ENCODE measurements at regions of chr7 and their contacts with region 1.

Region 1: GRCh38 chr7:80379034-80379982 is 132.6 kb downstream of the GNAT3 start:
- DNase-seq: peak; percentile 77
- ATAC-seq: peak; percentile 83
- H3K4me3 ChIP-seq: no peak overlapping the region
- H3K27ac ChIP-seq: peak overlapping the region; percentile 56
- H3K4me1 ChIP-seq: peaks cover 33% of the 10 kb centered on the region
- H3K27me3 ChIP-seq: no peaks in the 10 kb centered on the region
- CTCF ChIP-seq: no peak

Region 2: GRCh38 chr7:80312139-80312661 is 67.1 kb before region 1 on chr7:
- CTCF ChIA-PET with region 1: no interaction called
- POLR2A ChIA-PET with region 1: no interaction called
- intact Hi-C with region 1: loop called (anchors 5 kb)
- DNase-seq: peak; percentile 75
- ATAC-seq: peak; percentile 94
- H3K4me3 ChIP-seq: no peak overlapping the region
- H3K27ac ChIP-seq: peak overlapping the region; percentile 74
- H3K4me1 ChIP-seq: peaks cover 23% of the 10 kb centered on the region
- H3K27me3 ChIP-seq: no peaks in the 10 kb centered on the region
- CTCF ChIP-seq: no peak

Region 3: DNA sequence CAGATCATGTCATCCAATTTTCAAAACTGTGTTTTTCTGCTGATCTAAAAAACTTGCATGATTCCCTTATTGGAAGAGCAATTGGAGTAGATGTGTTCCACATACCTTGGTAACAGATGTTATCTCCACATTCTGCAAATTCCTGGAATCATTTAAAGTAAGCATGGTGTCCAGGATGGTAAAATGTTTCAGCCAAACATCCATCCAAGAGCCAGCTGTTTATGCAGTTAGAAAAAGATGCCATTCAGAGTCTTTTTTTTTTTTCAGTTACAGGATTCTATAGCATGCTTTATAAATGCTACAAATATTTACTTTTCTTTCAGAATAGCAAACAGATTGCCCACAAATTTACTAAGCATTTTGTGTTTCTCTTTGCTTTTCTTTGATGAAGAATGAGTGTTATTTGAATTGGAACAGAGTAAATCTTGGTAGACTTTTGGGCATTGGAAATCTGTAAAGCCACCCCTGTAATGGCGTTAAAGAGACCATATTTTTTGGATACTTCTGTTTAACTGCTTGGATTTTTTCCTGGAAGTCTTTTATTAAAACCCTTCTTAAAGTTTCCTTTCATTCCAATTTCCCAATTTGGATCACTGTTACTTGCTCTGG is 17.2 kb before region 1 on chr7:
- CTCF ChIA-PET with region 1: no interaction called
- POLR2A ChIA-PET with region 1: no interaction called
- intact Hi-C with region 1: loop called (anchors 2 kb)
- DNase-seq: peak; percentile 65
- ATAC-seq: peak; percentile 77
- H3K4me3 ChIP-seq: peak overlapping the region; percentile 36; the same call in 1 of the 2 replicates
- H3K27ac ChIP-seq: peak overlapping the region; percentile 95
- H3K4me1 ChIP-seq: peaks cover 29% of the 10 kb centered on the region
- H3K27me3 ChIP-seq: no peaks in the 10 kb centered on the region
- CTCF ChIP-seq: no peak